ENCODE measurements at regions of chr14 and their contacts with region 1.

Region 1: DNA sequence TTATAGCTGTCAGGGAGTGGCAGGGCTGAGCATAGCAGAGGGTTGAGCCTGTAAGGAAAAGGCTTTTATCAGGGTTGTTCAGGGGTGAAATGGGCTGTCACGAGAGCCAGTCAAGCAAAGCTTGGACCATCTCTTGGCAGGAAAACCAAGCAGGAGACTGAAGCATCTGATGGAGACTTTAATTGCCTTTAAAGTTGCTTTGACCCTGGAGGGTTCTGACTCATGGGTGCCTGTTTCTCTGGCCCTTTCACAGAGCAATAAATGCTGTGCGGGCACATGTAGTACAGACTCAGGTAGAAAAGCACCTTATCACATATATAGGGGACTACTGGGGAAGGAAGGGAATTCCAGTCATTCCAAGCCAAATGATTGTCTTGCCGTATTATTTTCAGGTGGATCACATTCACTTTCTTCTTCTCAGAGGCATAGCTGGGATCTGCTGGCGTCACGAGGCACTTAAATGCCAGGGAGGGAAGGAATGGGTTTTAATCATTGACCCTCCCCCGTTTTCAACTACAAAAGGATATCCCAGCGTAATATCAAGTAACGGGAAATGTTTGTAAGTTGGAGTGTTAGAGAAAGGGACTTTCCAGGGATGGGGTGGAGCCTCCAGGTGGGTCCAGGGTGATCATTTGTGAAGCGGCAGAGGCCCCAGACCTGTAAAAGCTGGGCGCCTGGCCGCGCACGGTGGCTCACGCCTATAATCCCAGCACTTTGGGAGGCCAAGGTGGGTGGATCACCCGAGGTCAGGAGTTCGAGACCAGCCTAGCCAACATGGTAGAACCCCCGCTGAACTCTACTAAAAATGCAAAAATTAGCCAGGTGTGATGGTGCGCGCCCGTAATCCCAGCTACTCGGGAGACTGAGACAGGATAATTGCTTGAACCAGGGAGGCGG is 34.9 kb downstream of the PLEKHD1 start:
- DNase-seq: no peak
- H3K4me3 ChIP-seq: no peak overlapping the region
- H3K27ac ChIP-seq: no peak overlapping the region
- H3K27me3 ChIP-seq: peaks cover 27% of the 10 kb centered on the region
- CTCF ChIP-seq: no peak

Region 2: GRCh38 chr14:69475194-69475818 is 44.1 kb before region 1 on chr14:
- CTCF ChIA-PET with region 1: no interaction called
- POLR2A ChIA-PET with region 1: no interaction called
- DNase-seq: no peak
- H3K4me3 ChIP-seq: no peak overlapping the region
- H3K27ac ChIP-seq: no peak overlapping the region
- H3K27me3 ChIP-seq: peaks cover 12% of the 10 kb centered on the region
- CTCF ChIP-seq: peak; percentile 48

Region 3: GRCh38 chr14:69501423-69501838 is 18.0 kb before region 1 on chr14:
- CTCF ChIA-PET with region 1: interaction called, 13 read pairs
- POLR2A ChIA-PET with region 1: no interaction called
- DNase-seq: no peak
- H3K4me3 ChIP-seq: no peak overlapping the region
- H3K27ac ChIP-seq: no peak overlapping the region
- H3K27me3 ChIP-seq: peaks cover 40% of the 10 kb centered on the region
- CTCF ChIP-seq: no peak

Measured in AG04450 (cell line).